RWPE1 (cell line): ENCODE measurements at regions of chr1 and their contacts with region 1.

Region 1: GRCh38 chr1:201511941-201512539 is 5.1 kb upstream of the CSRP1 start:
- DNase-seq: no peak
- H3K27ac ChIP-seq: peak overlapping the region; percentile 41; the same call in 1 of the 2 replicates
- CTCF ChIP-seq: no peak

Region 2: GRCh38 chr1:201436393-201436792 is 75.6 kb before region 1 on chr1:
- CTCF ChIA-PET with region 1: interaction called, 33 read pairs
- POLR2A ChIA-PET with region 1: no interaction called
- DNase-seq: no peak
- H3K27ac ChIP-seq: no peak overlapping the region
- CTCF ChIP-seq: no peak

Region 3: GRCh38 chr1:201447911-201448871 is 63.8 kb before region 1 on chr1:
- CTCF ChIA-PET with region 1: interaction called, 51 read pairs
- POLR2A ChIA-PET with region 1: interaction called, 9 read pairs
- DNase-seq: peak; percentile 91
- H3K27ac ChIP-seq: peak overlapping the region; percentile 58
- CTCF ChIP-seq: peak; percentile 90

Region 4: GRCh38 chr1:201468844-201469511 is 43.1 kb before region 1 on chr1 and contains the start of gene PHLDA3:
- CTCF ChIA-PET with region 1: interaction called, 17 read pairs
- POLR2A ChIA-PET with region 1: interaction called, 6 read pairs
- DNase-seq: peak; percentile 94
- H3K27ac ChIP-seq: peak within 1 kb of the TSS; percentile 100
- CTCF ChIP-seq: no peak

Region 5: GRCh38 chr1:201476670-201477344 is 35.2 kb before region 1 on chr1:
- CTCF ChIA-PET with region 1: interaction called, 464 read pairs
- POLR2A ChIA-PET with region 1: interaction called, 4 read pairs
- DNase-seq: peak; percentile 93
- H3K27ac ChIP-seq: peak overlapping the region; percentile 97
- CTCF ChIP-seq: no peak

Region 6: GRCh38 chr1:201500670-201501120 is 11.3 kb before region 1 on chr1:
- CTCF ChIA-PET with region 1: interaction called, 464 read pairs
- POLR2A ChIA-PET with region 1: no interaction called
- DNase-seq: no peak
- H3K27ac ChIP-seq: peak overlapping the region; percentile 41
- CTCF ChIP-seq: no peak

Region 7: DNA sequence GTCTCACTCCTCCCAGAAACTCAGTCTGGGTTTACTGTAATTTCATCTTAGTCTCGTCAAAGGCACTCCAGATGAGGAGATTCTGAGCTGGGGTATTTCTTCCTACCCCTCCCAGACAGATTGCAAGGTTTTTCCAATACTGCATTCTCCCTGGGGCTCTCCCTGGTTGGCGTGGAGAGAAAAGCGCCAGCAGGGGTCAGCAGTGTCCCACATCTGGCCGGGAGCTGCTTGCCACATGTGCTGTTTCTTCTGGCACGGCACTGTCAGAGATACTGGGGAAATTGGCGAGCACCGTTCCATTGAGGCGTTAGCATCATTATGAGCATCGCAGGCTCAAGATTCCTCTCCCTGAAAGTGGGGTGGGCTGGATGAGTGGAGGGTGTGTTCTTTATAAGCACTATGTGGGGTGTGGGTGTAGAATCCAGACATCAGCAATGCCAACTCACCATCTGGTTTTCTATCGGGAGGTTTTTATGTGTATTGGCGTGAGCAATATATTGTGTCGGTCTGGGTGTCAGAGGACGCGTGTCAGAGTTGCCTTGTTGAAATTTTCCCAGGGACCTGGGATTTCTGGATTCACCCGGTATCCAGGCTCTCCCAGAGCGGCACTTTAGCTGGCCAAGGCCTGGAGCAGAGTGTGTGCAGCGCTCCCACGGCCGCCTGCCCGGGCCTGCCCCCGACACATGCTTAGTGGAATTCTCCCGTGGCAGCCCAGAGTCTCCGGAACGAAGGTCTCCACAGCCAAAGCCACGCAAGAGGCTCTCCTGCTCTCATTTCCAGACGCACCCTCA is 18.9 kb after region 1 on chr1:
- CTCF ChIA-PET with region 1: interaction called, 24 read pairs
- POLR2A ChIA-PET with region 1: no interaction called
- DNase-seq: peak; percentile 78
- H3K27ac ChIP-seq: no peak overlapping the region
- CTCF ChIP-seq: peak; percentile 84